ENCODE measurements at regions of chr10 and their contacts with region 1.

Region 1: DNA sequence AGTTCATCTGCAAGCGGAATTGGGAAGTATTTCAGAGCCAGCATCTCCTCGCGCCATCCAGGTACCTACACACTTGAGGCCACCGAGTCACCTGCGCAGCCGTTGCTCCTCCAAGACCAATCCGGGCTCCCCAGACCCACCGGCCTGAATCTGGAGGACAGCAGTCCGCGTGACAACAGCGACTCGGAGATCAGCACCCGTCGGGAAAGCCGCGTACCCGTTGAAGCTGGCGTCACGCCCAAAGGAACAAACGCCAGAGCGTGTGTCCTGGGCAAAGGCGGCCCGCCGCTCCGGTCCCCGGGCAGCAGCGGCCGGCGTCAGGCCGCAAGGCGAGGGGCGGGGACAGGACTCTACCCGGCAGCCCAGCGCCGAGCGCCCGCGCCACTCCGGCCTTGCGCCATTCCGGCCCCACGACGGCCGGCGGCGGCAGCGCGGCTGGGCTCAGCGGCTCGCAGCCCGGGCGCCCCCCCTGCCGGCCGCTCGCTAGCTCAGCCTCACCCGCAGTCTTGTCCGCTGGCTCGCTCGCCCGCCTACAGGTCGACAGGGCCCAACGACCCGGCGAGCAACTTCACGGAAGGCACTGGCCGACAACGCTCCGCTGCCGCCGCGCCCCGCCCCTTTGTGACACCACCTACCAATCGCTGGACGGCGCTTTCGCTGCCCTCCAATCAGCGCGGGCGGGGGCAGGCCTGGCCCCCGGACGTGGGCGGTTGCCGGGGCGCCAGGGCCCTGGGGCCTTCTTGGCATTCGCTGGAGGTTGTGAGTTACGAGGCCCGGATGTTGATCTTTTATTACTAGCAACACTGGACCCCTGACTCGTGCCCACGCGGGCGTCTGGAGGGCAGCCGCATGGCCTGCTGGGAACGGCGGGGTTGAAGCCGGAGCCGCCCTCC is at the start of gene ZFAND4:
- DNase-seq: peak; percentile 94
- H3K4me3 Mint-ChIP-seq: peak within 1 kb of the TSS; percentile 87
- H3K27ac Mint-ChIP-seq: peak within 1 kb of the TSS; percentile 79
- H3K4me1 Mint-ChIP-seq: peaks cover 30% of the 10 kb centered on the region
- H3K27me3 Mint-ChIP-seq: no peaks in the 10 kb centered on the region
- total RNA-seq, gene ZFAND4: 11.1 and 11.5 TPM in 2 replicates

Region 2: DNA sequence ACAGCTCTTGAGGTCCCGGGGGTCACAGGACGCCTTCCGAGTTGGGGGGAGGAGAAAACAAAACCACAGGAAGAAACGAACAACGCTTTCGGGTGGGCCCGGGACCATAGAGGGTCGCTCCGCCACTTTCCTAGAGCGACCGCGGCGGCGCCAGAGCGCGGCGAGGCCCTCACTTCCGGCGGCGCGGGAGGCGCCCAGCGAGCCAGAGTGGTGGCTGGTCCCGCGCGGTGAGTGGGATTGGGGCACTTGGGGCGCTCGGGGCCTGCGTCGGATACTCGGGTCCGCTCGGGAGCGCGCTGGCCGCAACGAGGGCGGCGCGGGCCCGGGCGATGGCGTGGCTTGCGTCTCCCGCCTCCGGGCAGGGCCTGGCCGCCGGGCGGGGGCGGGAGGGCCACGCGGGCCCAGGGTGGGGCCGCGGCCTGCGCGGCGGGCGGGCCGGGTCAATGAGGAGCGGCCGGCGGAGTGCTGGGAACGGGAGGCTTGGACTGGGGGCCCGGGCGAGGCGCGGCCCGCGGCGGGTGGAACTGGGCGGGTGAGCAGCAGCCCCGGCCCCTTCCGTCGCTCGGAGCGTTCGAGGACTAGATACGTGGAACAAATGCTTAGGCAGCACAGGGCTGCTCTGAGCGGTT is 671.6 kb before region 1 on chr10 and contains the start of gene ZNF22:
- intact Hi-C with region 1: loop called (anchors 5 kb)
- DNase-seq: peak; percentile 61
- H3K4me3 Mint-ChIP-seq: peak within 1 kb of the TSS; percentile 93
- H3K27ac Mint-ChIP-seq: peak within 1 kb of the TSS; percentile 96
- H3K4me1 Mint-ChIP-seq: peaks cover 34% of the 10 kb centered on the region
- H3K27me3 Mint-ChIP-seq: peaks cover 7% of the 10 kb centered on the region
- total RNA-seq, gene ZNF22: 23.1 and 25.6 TPM in 2 replicates

Region 3: GRCh38 chr10:45265995-45266394 is 406.4 kb before region 1 on chr10:
- intact Hi-C with region 1: no loop called
- DNase-seq: no peak
- H3K4me3 Mint-ChIP-seq: no peak overlapping the region
- H3K27ac Mint-ChIP-seq: no peak overlapping the region
- H3K4me1 Mint-ChIP-seq: no peaks in the 10 kb centered on the region
- H3K27me3 Mint-ChIP-seq: peaks cover 32% of the 10 kb centered on the region

Region 4: GRCh38 chr10:45373576-45374349 is 298.7 kb before region 1 on chr10 and contains the start of gene ALOX5:
- intact Hi-C with region 1: loop called (anchors 5 kb)
- DNase-seq: peak; percentile 48
- H3K4me3 Mint-ChIP-seq: peak within 1 kb of the TSS; percentile 87
- H3K27ac Mint-ChIP-seq: peak within 1 kb of the TSS; percentile 67
- H3K4me1 Mint-ChIP-seq: peaks cover 37% of the 10 kb centered on the region
- H3K27me3 Mint-ChIP-seq: peaks cover 59% of the 10 kb centered on the region
- total RNA-seq, gene ALOX5: 2.9 and 3.1 TPM in 2 replicates

Region 5: DNA sequence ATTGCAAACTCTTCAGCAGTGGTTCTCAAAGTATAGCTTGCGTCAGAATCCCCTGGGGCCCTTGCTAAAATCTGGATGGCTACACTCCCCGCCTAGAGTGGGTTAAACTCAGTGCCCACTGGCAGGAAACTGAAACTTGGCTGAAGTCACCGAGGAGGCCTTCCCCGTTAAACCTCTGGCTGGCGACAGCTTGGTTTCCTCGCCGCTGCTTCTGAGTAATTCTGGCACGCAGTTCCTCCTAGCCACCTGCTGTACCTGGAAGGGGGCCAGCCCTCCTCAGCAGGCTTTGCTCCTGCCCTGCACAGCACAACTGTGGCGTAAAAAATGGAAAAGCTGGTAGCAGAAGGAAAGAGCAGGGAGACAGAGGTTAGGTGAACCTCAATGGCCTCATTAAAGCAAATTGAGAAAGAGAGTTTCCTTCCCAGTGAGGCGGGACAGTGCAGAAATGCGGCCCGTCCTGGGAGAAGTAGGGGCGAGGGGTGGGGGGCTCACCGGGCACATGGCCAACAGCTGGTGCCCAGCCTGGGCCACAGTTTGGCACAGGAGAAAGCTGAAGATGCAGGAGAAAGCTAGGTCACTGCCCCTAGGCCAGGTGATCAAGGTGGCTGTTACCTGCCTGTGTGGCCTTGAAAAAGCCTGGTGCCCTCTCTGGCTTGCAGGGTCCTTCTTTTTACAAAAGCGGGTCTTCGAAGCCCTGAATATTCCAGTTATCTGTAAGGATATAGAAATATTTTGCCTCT is 251.8 kb before region 1 on chr10:
- intact Hi-C with region 1: loop called (anchors 1 kb)
- DNase-seq: peak; percentile 65
- H3K4me3 Mint-ChIP-seq: peak overlapping the region; percentile 96
- H3K27ac Mint-ChIP-seq: peak overlapping the region; percentile 98
- H3K4me1 Mint-ChIP-seq: peaks cover 91% of the 10 kb centered on the region
- H3K27me3 Mint-ChIP-seq: no peaks in the 10 kb centered on the region

Region 6: GRCh38 chr10:45653454-45653853 is 19.0 kb before region 1 on chr10:
- intact Hi-C with region 1: loop called (anchors 1 kb)
- DNase-seq: no peak
- H3K4me3 Mint-ChIP-seq: no peak overlapping the region
- H3K27ac Mint-ChIP-seq: no peak overlapping the region
- H3K4me1 Mint-ChIP-seq: peaks cover 28% of the 10 kb centered on the region
- H3K27me3 Mint-ChIP-seq: no peaks in the 10 kb centered on the region

Region 7: DNA sequence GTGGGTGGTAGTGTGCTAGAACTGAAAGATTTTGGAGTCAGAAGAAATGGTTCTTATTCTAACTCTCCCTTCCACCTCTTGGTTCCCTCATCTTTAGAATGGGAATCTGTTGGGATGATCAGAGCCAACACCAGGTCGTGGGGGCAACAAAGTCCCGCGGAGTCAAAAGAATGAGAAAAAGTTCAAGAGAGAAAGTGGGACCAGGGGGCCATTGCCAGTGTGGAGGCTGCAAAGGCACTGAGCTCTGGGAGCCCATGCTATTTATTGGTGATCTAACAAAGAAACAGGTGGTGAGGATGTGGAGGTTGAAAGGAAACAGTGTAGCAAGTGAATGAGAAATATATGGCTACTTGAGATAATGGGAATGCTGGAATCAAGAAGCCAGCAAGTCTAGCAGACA is 145.5 kb after region 1 on chr10:
- intact Hi-C with region 1: no loop called
- DNase-seq: no peak
- H3K4me3 Mint-ChIP-seq: no peak overlapping the region
- H3K27ac Mint-ChIP-seq: no peak overlapping the region
- H3K4me1 Mint-ChIP-seq: no peaks in the 10 kb centered on the region
- H3K27me3 Mint-ChIP-seq: peaks cover 3% of the 10 kb centered on the region

Measured in activated T-helper 1 cell treated with anti-CD3 and anti-CD28 coated beads, Interleukin-12 subunit alpha, Interleukin-12 subunit beta, Interleukin-2, Interleukin-4 antibody, amounts not matched to agents 30 ng/mL and 10 ng/mL and 1 ng/mL, durations not matched to agents 14 hours and 24 hours and 36 hours (primary cell).